ENCODE measurements at regions of chr7 and their contacts with region 1.

Region 1: GRCh38 chr7:42997611-42998010 is 65.4 kb downstream of the MRPL32 start:
- DNase-seq: no peak

Region 2: DNA sequence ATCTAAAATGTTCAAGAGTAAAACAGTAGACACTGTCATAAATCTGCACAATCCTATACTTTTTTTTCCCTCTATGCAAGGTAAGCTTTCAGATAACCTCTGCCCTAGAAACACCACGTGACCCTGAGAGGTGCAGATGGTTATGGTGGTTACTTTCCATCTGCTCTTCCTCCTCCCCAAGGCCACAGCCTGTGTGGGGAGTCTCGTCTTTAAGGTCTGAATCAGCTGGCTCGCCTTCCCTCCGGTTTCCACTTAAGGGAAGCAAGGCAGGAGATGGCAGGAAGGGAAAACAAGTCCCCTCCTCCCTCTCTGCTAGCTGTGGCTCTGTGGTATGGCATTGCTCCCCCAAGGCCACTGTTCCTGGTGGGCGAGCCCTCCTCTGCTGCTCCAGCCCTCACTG is 942.4 kb before region 1 on chr7:
- intact Hi-C with region 1: loop called in 1 of 2 experiments (anchors 5 kb)
- DNase-seq: no peak

Measured in posterior vena cava (tissue), 2 donors.